ENCODE measurements at regions of chr20 and their contacts with region 1.

Region 1: GRCh38 chr20:16573001-16573965 is at the start of gene KIF16B:
- DNase-seq: peak; percentile 76
- ATAC-seq: peak; percentile 94
- H3K4me3 ChIP-seq: peak within 1 kb of the TSS; percentile 74
- H3K27ac ChIP-seq: peak within 1 kb of the TSS; percentile 49
- H3K4me1 ChIP-seq: peaks cover 8% of the 10 kb centered on the region
- H3K27me3 ChIP-seq: no peaks in the 10 kb centered on the region
- CTCF ChIP-seq: no peak
- POLR2A ChIP-seq: no peak
- RAD21 ChIP-seq: no peak
- total RNA-seq, gene KIF16B: 10.0 and 10.6 TPM in 2 replicates

Region 2: GRCh38 chr20:16528078-16528477 is 45.2 kb before region 1 on chr20:
- CTCF ChIA-PET with region 1: no interaction called
- POLR2A ChIA-PET with region 1: no interaction called
- dilution Hi-C with region 1: no loop called
- in situ Hi-C with region 1: no loop called
- intact Hi-C with region 1: loop called (anchors 5 kb)
- DNase-seq: peak; percentile 96
- ATAC-seq: peak; percentile 84
- H3K4me3 ChIP-seq: no peak overlapping the region
- H3K27ac ChIP-seq: peak overlapping the region; percentile 46; the same call in 1 of the 2 replicates
- H3K4me1 ChIP-seq: peaks cover 14% of the 10 kb centered on the region
- H3K27me3 ChIP-seq: no peaks in the 10 kb centered on the region
- CTCF ChIP-seq: no peak
- POLR2A ChIP-seq: no peak
- RAD21 ChIP-seq: no peak

Region 3: DNA sequence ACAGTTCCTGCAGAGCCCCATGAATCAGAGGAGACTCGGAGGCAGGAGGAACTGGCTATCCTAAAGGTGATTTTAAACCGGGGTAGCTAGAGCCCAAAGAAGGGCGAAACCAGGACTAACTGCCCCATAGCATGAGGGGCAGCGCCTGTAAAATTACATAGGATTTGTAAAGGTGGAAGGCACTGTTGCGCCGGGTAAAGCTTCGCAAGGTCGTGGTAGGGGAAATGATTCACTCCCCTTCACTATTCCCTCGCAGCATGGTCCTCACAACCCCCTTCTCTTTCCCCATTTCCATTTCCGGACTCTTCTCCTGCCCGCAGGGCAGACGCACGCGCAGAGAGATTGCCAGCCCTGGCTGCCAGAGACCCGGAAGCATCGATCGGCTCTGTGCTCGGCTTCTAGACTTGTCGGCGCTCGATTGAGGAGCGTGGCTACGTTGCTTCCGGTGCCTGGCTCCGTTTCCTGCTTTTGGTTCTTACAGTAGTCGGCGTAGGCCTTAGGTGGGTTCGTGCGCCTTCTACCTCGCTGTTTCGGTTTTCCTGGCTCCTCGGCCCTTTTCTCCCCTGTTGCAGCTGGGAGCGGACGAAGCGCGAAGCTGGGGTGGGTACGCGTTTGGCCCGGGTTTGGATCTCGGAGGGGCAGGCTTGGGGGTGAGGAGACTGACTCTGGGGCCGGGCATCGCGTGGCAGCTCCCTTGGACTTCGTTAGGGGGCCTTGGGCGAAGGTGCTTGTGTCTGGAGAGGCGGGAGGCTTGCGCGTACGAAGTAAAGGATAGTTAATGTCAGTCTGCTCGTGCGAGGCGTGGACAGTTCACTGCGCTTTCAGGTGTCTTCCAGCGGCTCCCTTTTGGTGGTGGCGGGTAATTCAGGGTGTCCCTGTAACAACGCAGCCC is 156.5 kb after region 1 on chr20 and contains the start of gene SNRPB2:
- CTCF ChIA-PET with region 1: no interaction called
- POLR2A ChIA-PET with region 1: no interaction called
- dilution Hi-C with region 1: no loop called
- in situ Hi-C with region 1: no loop called
- intact Hi-C with region 1: loop called (anchors 10 kb)
- DNase-seq: peak; percentile 95
- ATAC-seq: peak; percentile 99
- H3K4me3 ChIP-seq: peak within 1 kb of the TSS; percentile 89
- H3K27ac ChIP-seq: peak within 1 kb of the TSS; percentile 92
- H3K4me1 ChIP-seq: no peaks in the 10 kb centered on the region; the same call in 1 of the 2 replicates
- H3K27me3 ChIP-seq: no peaks in the 10 kb centered on the region
- CTCF ChIP-seq: no peak
- POLR2A ChIP-seq: peak; percentile 94
- RAD21 ChIP-seq: no peak
- total RNA-seq, gene SNRPB2: 27.1 and 69.2 TPM in 2 replicates

Measured in IMR-90 (cell line).